ENCODE measurements at regions of chr2 and their contacts with region 1.

Region 1: GRCh38 chr2:38568724-38569436 is 33.8 kb downstream of the HNRNPLL start:
- DNase-seq: no peak
- H3K27ac ChIP-seq: no peak overlapping the region
- CTCF ChIP-seq: no peak

Region 2: GRCh38 chr2:38739524-38739923 is 170.6 kb after region 1 on chr2:
- CTCF ChIA-PET with region 1: interaction called, 5 read pairs
- POLR2A ChIA-PET with region 1: interaction called, 10 read pairs
- DNase-seq: no peak
- H3K27ac ChIP-seq: no peak overlapping the region
- CTCF ChIP-seq: no peak

Measured in RWPE1 (cell line).